IMR-90 (cell line): ENCODE measurements at regions of chr5 and their contacts with region 1.

Region 1: GRCh38 chr5:54234304-54234933 is 76.0 kb downstream of the ARL15 start:
- DNase-seq: peak; percentile 73
- ATAC-seq: peak; percentile 70
- H3K4me3 ChIP-seq: no peak overlapping the region
- H3K27ac ChIP-seq: no peak overlapping the region
- H3K4me1 ChIP-seq: no peaks in the 10 kb centered on the region
- H3K27me3 ChIP-seq: no peaks in the 10 kb centered on the region; the same call in 1 of the 2 replicates
- CTCF ChIP-seq: peak; percentile 70
- POLR2A ChIP-seq: no peak
- RAD21 ChIP-seq: peak; percentile 57

Region 2: GRCh38 chr5:53123702-53124101 is 1110.7 kb before region 1 on chr5:
- CTCF ChIA-PET with region 1: interaction called, 3 read pairs
- POLR2A ChIA-PET with region 1: no interaction called
- dilution Hi-C with region 1: no loop called
- in situ Hi-C with region 1: loop called (anchors 5 kb)
- intact Hi-C with region 1: loop called (anchors 1 kb)
- DNase-seq: peak; percentile 40
- ATAC-seq: peak; percentile 36; the same call in 1 of the 2 replicates
- H3K4me3 ChIP-seq: no peak overlapping the region
- H3K27ac ChIP-seq: no peak overlapping the region
- H3K4me1 ChIP-seq: peaks cover 5% of the 10 kb centered on the region; the same call in 1 of the 2 replicates
- H3K27me3 ChIP-seq: no peaks in the 10 kb centered on the region; the same call in 1 of the 2 replicates
- CTCF ChIP-seq: peak; percentile 41
- POLR2A ChIP-seq: no peak
- RAD21 ChIP-seq: peak; percentile 46